Heart left ventricle (tissue), 16 donors: ENCODE measurements at regions of chr9 and their contacts with region 1.

Region 1: DNA sequence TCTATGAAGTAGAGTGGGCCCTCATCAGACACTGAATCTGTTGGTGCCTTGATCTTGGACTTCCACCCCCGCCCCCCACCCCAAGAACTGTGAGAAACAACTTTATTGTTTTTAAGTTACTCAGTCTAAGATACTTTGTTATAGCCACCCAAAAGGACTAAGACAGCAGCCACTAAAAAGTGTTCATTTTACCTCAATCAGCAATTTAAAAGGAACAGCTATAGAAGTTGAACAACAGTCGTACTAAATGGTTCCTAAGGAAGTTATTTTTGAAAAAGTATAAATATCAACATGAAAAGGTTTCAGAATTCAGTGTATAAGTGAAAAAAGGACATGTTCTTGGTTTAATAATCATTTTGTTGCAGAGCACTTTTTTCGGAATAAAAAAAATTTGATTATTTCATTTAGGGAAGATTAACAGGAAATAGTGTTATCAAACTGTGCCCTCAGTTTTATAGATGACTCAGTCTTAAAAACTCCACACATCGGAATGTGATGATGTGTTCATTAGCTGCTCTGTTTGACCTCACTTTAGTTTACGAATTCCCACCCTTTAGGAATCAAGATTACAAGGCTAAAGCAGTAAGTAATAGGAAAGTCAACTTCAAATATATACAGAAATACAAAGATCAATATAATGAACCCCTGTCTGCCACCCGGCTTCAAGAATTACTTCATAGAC is 71.2 kb downstream of the MTAP start:
- DNase-seq: no peak
- ATAC-seq: no peak
- H3K4me3 ChIP-seq: no peak overlapping the region
- H3K27ac ChIP-seq: no peak overlapping the region
- H3K4me1 ChIP-seq: peaks cover 0 to 4% (median 0%) of the 10 kb centered on the region in 12 donors
- H3K27me3 ChIP-seq: no peaks in the 10 kb centered on the region
- CTCF ChIP-seq: no peak
- POLR2A ChIP-seq: no peak

Region 2: GRCh38 chr9:21626493-21626892 is 247.2 kb before region 1 on chr9:
- intact Hi-C with region 1: no loop called
- DNase-seq: no peak
- ATAC-seq: no peak
- H3K4me3 ChIP-seq: no peak overlapping the region
- H3K27ac ChIP-seq: no peak overlapping the region
- H3K4me1 ChIP-seq: no peaks in the 10 kb centered on the region
- H3K27me3 ChIP-seq: peaks cover 0 to 13% (median 0%) of the 10 kb centered on the region in 9 donors
- CTCF ChIP-seq: no peak
- POLR2A ChIP-seq: no peak

Region 3: GRCh38 chr9:21927752-21928151 is 54.1 kb after region 1 on chr9:
- intact Hi-C with region 1: loop called in 1 of 10 experiments (anchors 5 kb)
- DNase-seq: no peak
- ATAC-seq: no peak
- H3K4me3 ChIP-seq: no peak overlapping the region
- H3K27ac ChIP-seq: no peak overlapping the region
- H3K4me1 ChIP-seq: no peaks in the 10 kb centered on the region
- H3K27me3 ChIP-seq: no peaks in the 10 kb centered on the region
- CTCF ChIP-seq: no peak
- POLR2A ChIP-seq: no peak